ENCODE measurements at regions of chr4 and their contacts with region 1.

Region 1: DNA sequence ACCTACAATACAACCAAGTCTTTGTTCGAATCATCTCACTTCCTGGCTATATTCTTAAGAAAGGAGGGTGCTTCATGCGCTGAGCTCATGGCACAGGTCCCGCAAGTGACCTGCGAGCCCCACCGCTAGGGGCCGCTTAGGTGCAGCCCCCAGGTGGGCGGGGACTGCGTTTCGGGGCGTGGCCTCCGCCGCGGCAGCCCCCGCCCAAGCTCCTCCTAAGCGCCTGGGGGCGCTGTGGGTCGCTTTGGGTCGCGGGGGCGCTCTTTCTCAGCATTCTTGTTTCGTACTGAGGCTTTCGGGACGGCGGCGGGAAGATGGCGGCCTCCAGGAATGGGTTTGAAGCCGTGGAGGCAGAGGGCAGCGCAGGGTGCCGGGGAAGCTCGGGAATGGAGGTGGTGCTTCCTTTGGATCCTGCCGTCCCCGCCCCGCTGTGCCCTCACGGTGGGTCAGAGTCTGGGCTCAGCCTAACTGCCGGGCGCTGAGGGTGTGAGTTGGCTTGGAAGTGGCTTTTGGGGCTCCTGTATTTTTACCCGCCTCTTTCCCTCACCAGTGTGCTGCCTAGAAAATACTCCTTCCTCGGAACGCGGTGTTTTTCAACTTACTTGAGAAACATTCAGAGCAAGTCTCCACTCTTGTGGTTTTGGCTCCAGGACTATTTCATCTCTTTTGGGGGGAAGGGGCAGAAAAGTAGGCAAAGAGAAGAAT is at the start of gene ZCCHC4:
- DNase-seq: peak; percentile 81
- ATAC-seq: peak; percentile 97
- H3K4me3 Mint-ChIP-seq: peak within 1 kb of the TSS; percentile 99
- H3K27ac Mint-ChIP-seq: peak within 1 kb of the TSS; percentile 99
- H3K4me1 Mint-ChIP-seq: peaks cover 11% of the 10 kb centered on the region; the same call in 1 of the 2 replicates
- H3K27me3 Mint-ChIP-seq: no peaks in the 10 kb centered on the region
- CTCF ChIP-seq: peak; percentile 85
- total RNA-seq, gene ZCCHC4: 12.4 to 13.6 TPM (median 13.3 TPM) in 3 replicates

Region 2: DNA sequence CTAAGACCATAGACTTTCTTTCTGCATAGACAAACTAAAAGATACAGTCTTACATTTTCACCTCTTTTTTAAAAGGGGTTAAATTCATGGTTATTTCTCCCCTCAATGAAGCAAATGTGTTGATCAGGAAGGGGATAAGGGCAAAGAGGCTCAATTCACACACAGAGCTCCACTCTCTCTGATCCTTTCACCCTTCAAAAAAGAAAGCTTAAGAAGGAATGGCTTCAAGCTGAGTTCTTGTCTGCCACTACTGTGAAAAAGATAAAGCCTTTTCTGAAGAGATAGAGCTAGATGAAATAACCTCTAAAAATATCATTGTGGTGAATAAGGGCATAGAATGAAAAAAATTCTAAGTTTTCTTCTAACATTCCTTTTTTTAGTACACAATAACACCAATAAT is 180.7 kb before region 1 on chr4:
- CTCF ChIA-PET with region 1: interaction called, 12 read pairs
- POLR2A ChIA-PET with region 1: no interaction called
- DNase-seq: no peak
- ATAC-seq: peak; percentile 94
- H3K4me3 Mint-ChIP-seq: no peak overlapping the region; the same call in 1 of the 2 replicates
- H3K27ac Mint-ChIP-seq: 0 out of 2 replicates have a peak overlapping the region, but pooled peaks have one; percentile 61
- H3K4me1 Mint-ChIP-seq: peaks cover 54% of the 10 kb centered on the region
- H3K27me3 Mint-ChIP-seq: no peaks in the 10 kb centered on the region; the same call in 1 of the 2 replicates
- CTCF ChIP-seq: no peak

Region 3: DNA sequence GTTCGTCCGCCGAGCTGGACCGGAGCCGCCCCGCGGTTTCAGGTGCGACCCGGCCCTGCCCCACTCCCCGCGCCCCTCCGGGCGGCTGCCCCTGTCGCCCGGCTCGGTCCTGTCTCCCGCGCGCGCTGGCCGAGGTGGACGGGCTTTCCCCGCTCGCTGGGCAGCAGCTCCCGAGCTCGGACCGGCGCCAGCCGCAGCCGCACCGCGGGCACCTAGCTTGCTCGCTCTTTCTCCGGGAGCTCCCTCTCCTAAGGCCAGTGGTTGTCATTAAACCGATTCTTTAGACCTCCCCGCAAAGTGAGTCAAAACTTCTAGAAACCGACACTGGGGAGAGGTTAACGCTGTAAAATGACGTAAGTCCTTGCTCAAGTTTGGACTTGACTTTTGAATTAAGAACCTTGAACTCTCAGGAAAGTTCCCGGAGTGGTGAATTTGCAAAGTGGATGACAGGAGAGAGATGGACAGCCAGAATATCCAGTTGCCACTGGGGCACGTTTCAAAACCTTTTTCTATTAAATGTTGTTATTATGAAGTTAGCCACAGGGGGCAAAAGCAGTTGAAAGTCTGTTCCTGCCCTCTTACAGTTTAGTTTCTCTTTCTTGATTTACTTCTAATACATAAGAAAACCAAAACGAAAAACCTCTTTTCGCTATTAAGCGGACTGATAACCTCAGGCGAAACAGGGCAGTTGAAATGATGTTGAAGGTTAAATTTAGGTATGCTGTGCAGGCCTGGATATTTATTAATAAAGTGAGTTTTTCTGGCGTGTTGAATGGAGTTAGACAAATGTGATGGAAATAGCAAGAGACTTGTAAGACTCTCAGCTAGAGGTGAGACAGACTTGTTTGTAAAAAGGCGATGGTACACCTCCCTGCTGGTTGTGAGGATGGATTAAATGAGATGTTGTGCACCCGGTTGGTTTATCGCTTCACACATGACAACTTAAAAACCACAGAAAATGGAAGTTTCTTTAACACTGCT is 78.0 kb before region 1 on chr4:
- CTCF ChIA-PET with region 1: interaction called, 30 read pairs
- POLR2A ChIA-PET with region 1: interaction called, 4 read pairs
- DNase-seq: peak; percentile 44
- ATAC-seq: peak; percentile 59
- H3K4me3 Mint-ChIP-seq: peak overlapping the region; percentile 83
- H3K27ac Mint-ChIP-seq: no peak overlapping the region
- H3K4me1 Mint-ChIP-seq: peaks cover 11% of the 10 kb centered on the region
- H3K27me3 Mint-ChIP-seq: peaks cover 35% of the 10 kb centered on the region
- CTCF ChIP-seq: no peak

Region 4: DNA sequence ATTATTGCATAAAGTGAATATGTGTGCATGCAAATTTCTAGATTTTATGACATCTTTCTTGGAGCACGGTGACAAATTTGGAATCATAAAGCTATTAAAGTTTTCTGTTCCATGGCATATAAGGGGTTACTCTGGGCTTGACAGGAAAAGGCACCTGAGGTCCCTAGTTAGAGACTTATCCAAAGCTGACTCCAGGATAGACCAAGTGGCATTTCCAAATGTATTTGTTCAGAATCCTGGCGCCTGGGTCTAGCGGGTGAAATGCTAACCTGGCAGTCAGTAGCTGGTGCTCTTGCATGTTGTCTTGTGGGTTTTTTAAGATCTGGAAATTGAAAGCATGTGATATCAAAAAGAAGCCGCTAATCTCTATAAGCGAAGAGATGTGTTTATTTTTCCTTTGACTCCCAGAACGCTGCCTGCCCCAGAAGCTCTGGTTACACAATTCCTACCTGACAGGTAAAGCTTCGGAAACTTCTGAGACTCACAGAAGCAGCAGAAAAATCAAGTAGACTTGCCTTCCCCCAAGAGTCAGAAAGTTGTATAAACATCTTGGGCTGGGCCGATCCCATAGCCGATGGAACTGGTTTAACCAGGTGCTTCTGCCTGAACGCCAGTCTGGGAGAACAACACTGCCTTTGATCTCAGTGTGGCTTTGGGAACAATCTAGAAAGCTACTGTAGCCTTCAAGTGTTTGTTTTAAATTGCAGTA is 13.0 kb before region 1 on chr4:
- CTCF ChIA-PET with region 1: interaction called, 20 read pairs
- POLR2A ChIA-PET with region 1: no interaction called
- DNase-seq: no peak
- ATAC-seq: peak; percentile 84
- H3K4me3 Mint-ChIP-seq: no peak overlapping the region
- H3K27ac Mint-ChIP-seq: no peak overlapping the region
- H3K4me1 Mint-ChIP-seq: peaks cover 15% of the 10 kb centered on the region
- H3K27me3 Mint-ChIP-seq: no peaks in the 10 kb centered on the region; the same call in 1 of the 2 replicates
- CTCF ChIP-seq: no peak

Region 5: DNA sequence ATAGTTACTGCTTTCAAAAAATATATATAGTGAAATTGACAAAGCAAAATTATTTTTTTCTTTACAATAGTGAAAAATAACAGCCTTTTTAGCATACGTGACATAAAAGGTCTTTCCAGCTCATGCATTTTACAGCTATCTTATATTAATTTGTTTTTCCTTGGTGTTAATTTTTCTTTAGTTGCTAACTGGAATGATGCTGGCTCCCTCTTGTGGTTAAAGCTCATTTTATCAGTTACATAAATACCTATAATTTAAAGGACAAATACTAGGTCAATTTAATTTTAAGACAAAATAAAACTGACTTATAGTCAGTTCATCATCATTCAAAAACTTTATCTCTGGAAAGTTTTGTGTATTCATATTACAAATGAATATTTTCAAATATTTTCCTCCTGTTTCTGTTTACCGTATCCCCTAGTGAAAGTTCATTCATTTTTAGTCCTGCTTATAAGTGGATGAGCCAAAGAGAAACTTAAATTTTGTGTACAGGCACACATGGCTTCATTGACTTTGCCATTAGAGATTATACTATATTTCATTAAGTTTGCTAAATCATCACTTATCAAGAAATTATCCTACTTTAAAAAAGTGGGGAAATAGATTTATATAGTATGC is 54.5 kb after region 1 on chr4:
- CTCF ChIA-PET with region 1: interaction called, 36 read pairs
- POLR2A ChIA-PET with region 1: interaction called, 4 read pairs
- DNase-seq: no peak
- ATAC-seq: no peak
- H3K4me3 Mint-ChIP-seq: no peak overlapping the region
- H3K27ac Mint-ChIP-seq: no peak overlapping the region
- H3K4me1 Mint-ChIP-seq: peaks cover 11% of the 10 kb centered on the region
- H3K27me3 Mint-ChIP-seq: no peaks in the 10 kb centered on the region
- CTCF ChIP-seq: no peak